ENCODE measurements at regions of chr2 and their contacts with region 1.

Region 1: DNA sequence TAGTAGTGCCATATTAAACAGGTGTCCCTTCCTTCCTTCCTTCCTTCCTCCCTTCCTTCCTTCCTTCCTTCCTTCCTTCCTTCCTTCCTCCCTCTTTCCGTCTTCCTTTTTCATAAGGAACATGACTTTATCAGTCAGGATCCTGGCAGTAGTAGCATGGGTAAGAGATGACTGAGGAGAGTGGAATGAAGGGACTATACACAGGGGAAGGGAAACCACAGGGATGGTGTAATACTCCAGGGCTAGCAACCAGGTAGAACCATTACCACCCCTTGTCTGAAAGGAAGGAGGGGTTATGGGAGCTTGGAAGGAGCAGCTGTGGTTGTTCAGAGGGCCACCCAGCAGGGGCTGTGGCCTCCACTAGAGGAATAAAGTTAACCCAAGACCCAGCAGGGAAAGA is 23.2 kb upstream of the KDM3A start:
- DNase-seq: peak; percentile 78
- H3K4me3 ChIP-seq: no peak overlapping the region
- H3K27ac ChIP-seq: peak overlapping the region; percentile 21
- H3K4me1 ChIP-seq: peaks cover 41% of the 10 kb centered on the region
- H3K27me3 ChIP-seq: no peaks in the 10 kb centered on the region
- CTCF ChIP-seq: no peak

Region 2: GRCh38 chr2:86383844-86384243 is 34.1 kb before region 1 on chr2:
- CTCF ChIA-PET with region 1: interaction called, 10 read pairs
- POLR2A ChIA-PET with region 1: no interaction called
- intact Hi-C with region 1: no loop called
- DNase-seq: no peak
- H3K4me3 ChIP-seq: no peak overlapping the region
- H3K27ac ChIP-seq: no peak overlapping the region
- H3K4me1 ChIP-seq: no peaks in the 10 kb centered on the region
- H3K27me3 ChIP-seq: no peaks in the 10 kb centered on the region
- CTCF ChIP-seq: no peak

Region 3: GRCh38 chr2:86464652-86465051 is 46.7 kb after region 1 on chr2:
- CTCF ChIA-PET with region 1: no interaction called
- POLR2A ChIA-PET with region 1: no interaction called
- intact Hi-C with region 1: no loop called
- DNase-seq: no peak
- H3K4me3 ChIP-seq: no peak overlapping the region
- H3K27ac ChIP-seq: no peak overlapping the region
- H3K4me1 ChIP-seq: no peaks in the 10 kb centered on the region
- H3K27me3 ChIP-seq: no peaks in the 10 kb centered on the region
- CTCF ChIP-seq: no peak

Region 4: DNA sequence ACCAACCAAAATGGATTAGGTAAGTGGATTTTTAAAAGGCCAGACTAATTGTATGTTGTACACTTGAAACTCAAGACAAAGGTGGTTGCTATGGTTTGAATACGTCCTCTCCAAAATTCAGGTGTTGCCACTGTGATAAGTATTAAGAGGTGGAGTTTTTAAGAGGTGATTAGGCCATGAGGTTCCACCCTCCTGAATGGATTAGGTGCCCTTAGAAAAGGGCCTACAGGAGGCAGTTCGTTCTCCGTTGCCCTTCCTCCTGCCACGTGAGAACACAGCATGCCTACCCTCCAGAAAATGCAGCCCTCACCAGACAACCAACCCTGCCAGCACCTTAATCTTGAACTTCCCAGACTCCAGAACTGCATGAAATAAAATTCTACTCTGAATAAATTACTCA is 94.1 kb after region 1 on chr2:
- CTCF ChIA-PET with region 1: no interaction called
- POLR2A ChIA-PET with region 1: no interaction called
- intact Hi-C with region 1: no loop called
- DNase-seq: no peak
- H3K4me3 ChIP-seq: no peak overlapping the region
- H3K27ac ChIP-seq: no peak overlapping the region
- H3K4me1 ChIP-seq: no peaks in the 10 kb centered on the region
- H3K27me3 ChIP-seq: no peaks in the 10 kb centered on the region
- CTCF ChIP-seq: no peak

Measured in A673 (cell line).